ENCODE measurements at regions of chr3 and their contacts with region 1.

Region 1: GRCh38 chr3:17841190-17841828 is 98.9 kb upstream of the TBC1D5 start:
- DNase-seq: peak; percentile 83
- ATAC-seq: peak; percentile 95
- H3K4me3 Mint-ChIP-seq: no peak overlapping the region
- H3K27ac Mint-ChIP-seq: no peak overlapping the region
- H3K4me1 Mint-ChIP-seq: no peaks in the 10 kb centered on the region
- H3K27me3 Mint-ChIP-seq: no peaks in the 10 kb centered on the region
- CTCF ChIP-seq: peak; percentile 91

Region 2: DNA sequence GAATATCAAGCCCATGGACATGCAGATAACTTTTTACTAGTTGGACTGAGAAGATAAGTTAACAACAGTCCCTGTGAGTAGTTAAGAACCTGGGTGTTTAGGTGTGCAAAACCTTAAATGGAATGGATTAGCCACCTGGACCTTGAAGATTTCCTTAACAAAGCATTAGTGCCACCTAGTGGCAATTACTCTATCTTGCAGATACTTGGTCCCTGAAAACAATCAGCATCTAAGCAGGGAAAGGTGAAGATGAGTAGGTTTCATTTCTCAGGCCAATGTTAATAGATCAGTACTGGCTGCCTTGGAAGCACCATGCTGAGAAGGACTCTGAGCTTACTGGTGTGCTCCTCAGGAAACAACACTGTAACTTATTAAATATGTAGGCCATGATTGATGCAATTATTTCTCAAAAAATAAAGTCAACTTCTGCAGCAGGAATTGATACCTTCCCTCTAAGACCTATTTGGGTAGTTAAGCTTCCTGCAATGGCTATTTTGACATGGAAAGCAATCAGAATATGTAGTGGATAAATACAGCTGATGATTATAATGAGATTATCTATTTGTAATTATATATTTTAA is 428.3 kb before region 1 on chr3:
- CTCF ChIA-PET with region 1: interaction called, 16 read pairs
- POLR2A ChIA-PET with region 1: no interaction called
- intact Hi-C with region 1: no loop called
- DNase-seq: peak; percentile 5
- ATAC-seq: peak; percentile 73
- H3K4me3 Mint-ChIP-seq: no peak overlapping the region
- H3K27ac Mint-ChIP-seq: no peak overlapping the region
- H3K4me1 Mint-ChIP-seq: no peaks in the 10 kb centered on the region
- H3K27me3 Mint-ChIP-seq: no peaks in the 10 kb centered on the region
- CTCF ChIP-seq: peak; percentile 81

Region 3: DNA sequence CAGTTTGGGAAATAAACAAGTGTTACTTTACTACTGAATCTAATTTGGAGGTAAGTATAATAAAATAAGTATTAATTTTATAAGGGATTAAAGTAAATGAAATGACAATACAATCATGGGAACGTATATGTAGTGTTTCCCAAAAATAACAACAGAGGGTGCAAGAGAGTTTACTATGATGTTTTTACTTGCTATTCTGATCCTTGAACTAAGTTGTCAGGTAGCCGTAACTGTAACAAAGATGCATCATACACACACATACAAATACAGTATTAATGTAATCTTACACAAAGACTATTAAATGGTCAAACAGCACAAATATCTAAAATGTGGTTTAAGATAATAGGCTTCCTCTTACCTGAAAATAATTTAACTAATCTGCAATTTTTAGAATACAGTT is 410.3 kb before region 1 on chr3:
- CTCF ChIA-PET with region 1: interaction called, 26 read pairs
- POLR2A ChIA-PET with region 1: no interaction called
- intact Hi-C with region 1: loop called (anchors 5 kb)
- DNase-seq: no peak
- ATAC-seq: no peak
- H3K4me3 Mint-ChIP-seq: no peak overlapping the region
- H3K27ac Mint-ChIP-seq: no peak overlapping the region
- H3K4me1 Mint-ChIP-seq: no peaks in the 10 kb centered on the region
- H3K27me3 Mint-ChIP-seq: no peaks in the 10 kb centered on the region
- CTCF ChIP-seq: peak; percentile 45

Region 4: GRCh38 chr3:17581421-17582080 is 259.8 kb before region 1 on chr3:
- CTCF ChIA-PET with region 1: no interaction called
- POLR2A ChIA-PET with region 1: no interaction called
- intact Hi-C with region 1: no loop called
- DNase-seq: no peak
- ATAC-seq: no peak
- H3K4me3 Mint-ChIP-seq: no peak overlapping the region
- H3K27ac Mint-ChIP-seq: no peak overlapping the region
- H3K4me1 Mint-ChIP-seq: peaks cover 14% of the 10 kb centered on the region
- H3K27me3 Mint-ChIP-seq: no peaks in the 10 kb centered on the region
- CTCF ChIP-seq: no peak

Region 5: GRCh38 chr3:17742108-17742879 is 99.0 kb before region 1 on chr3 and contains the start of gene TBC1D5:
- CTCF ChIA-PET with region 1: interaction called, 11 read pairs
- POLR2A ChIA-PET with region 1: no interaction called
- intact Hi-C with region 1: no loop called
- DNase-seq: peak; percentile 96
- ATAC-seq: peak; percentile 96
- H3K4me3 Mint-ChIP-seq: peak within 1 kb of the TSS; percentile 93
- H3K27ac Mint-ChIP-seq: peak within 1 kb of the TSS; percentile 98
- H3K4me1 Mint-ChIP-seq: peaks cover 42% of the 10 kb centered on the region
- H3K27me3 Mint-ChIP-seq: no peaks in the 10 kb centered on the region
- CTCF ChIP-seq: no peak
- total RNA-seq, gene TBC1D5: 46.3 to 47.8 TPM

Region 6: GRCh38 chr3:17852217-17852616 is 10.9 kb after region 1 on chr3:
- CTCF ChIA-PET with region 1: interaction called, 16 read pairs
- POLR2A ChIA-PET with region 1: no interaction called
- intact Hi-C with region 1: no loop called
- DNase-seq: no peak
- ATAC-seq: no peak
- H3K4me3 Mint-ChIP-seq: no peak overlapping the region
- H3K27ac Mint-ChIP-seq: no peak overlapping the region
- H3K4me1 Mint-ChIP-seq: peaks cover 3% of the 10 kb centered on the region
- H3K27me3 Mint-ChIP-seq: no peaks in the 10 kb centered on the region
- CTCF ChIP-seq: no peak

Region 7: GRCh38 chr3:17915341-17915740 is 74.0 kb after region 1 on chr3:
- CTCF ChIA-PET with region 1: no interaction called
- POLR2A ChIA-PET with region 1: no interaction called
- intact Hi-C with region 1: no loop called
- DNase-seq: no peak
- ATAC-seq: no peak
- H3K4me3 Mint-ChIP-seq: no peak overlapping the region
- H3K27ac Mint-ChIP-seq: no peak overlapping the region
- H3K4me1 Mint-ChIP-seq: no peaks in the 10 kb centered on the region
- H3K27me3 Mint-ChIP-seq: peaks cover 3% of the 10 kb centered on the region
- CTCF ChIP-seq: no peak